CD14-positive monocyte (primary cell): ENCODE measurements at regions of chr12 and their contacts with region 1.

Region 1: DNA sequence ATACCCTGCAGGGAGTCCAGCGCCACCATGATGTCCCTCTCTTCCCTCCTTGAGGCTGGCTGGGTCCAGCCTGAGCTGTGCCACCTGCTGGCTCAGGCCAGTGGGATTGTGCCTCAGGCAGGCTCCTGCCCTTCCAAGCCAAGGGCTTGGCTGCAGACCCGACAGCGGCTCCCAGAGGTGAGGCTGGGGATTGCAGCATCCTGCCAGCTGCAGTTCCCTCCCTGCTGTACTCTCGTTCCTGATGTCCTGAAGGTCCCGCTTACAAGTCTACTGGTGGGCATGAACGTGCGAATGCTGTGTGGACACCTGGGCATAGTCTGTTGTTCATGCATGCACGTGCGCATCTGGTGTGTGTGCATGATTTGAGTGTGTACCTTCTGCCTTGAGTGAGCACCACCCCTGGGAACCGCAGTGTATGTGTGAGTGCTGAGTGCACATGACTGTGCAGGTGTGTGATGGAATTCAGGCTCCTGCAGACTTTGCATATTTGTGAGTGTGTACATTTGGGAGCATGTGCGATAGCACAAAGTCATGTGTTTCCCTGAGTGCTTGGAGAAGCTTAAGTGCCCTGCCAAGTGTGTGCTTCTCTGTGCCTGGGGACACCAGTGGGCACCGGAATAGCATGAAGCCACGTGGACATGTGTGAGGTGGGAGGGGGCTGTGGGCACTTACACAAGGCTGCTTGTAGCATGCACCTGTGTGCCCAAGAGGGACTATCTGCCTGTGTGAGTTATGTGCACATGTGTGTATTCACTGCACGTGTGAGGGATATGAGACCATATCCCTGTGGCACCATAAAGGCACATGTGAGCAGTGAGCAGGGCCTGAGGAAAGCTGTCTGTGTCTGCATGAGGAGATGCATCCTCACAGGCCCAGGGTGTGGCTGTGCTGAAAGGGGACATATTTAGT is 19.3 kb upstream of the KRT7 start:
- DNase-seq: peak; percentile 80 to 87 (median 82)
- H3K4me3 ChIP-seq: no peak overlapping the region
- H3K4me3 Mint-ChIP-seq: no peak overlapping the region
- H3K27ac ChIP-seq: no peak overlapping the region
- H3K27ac Mint-ChIP-seq: peak overlapping the region in 2 of 7 donors; percentile 50 to 77
- H3K4me1 ChIP-seq: peaks cover 22 to 41% of the 10 kb centered on the region in 2 donors
- H3K4me1 Mint-ChIP-seq: peaks cover 51% of the 10 kb centered on the region
- H3K27me3 ChIP-seq: no peaks in the 10 kb centered on the region
- H3K27me3 Mint-ChIP-seq: peaks cover under 1 to 2% (median 1%) of the 10 kb centered on the region in 3 donors
- CTCF ChIP-seq: peak; percentile 99

Region 2: DNA sequence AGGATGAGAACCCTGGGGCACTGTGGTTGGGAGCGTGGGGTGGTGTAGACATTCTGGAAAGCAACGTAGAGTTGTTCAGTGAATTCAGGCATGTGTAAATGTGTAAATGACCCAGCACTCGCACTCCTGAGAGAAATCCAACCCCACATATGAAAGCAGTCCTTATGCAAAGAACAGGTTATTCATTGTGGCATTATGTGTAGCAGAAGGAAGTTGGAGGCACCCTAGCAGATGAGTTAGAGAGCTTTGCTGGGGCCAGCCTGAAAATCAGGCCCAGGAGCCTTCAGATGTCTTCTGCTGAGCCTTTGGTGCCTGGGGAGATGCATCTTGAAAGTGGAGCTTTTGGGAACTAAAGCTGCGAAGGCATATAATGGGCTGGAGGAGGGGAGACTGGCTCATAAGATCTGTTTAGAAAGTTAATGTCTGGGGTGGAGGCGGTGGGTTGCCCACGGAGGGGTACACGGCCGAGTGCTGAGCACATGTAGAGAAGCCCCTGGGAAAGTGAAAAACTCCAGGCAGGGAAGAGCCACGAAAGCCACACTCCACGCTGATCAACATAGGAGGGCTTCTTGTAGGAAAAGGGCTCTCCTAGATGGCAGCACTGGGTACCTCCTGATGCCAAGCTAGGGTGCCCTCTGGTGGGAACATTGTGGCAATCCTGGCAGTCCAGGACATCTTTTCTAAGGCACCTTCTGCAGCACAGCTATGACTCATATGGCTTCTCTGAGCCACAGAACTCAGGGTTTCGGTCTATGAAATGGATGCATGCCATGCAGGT is 113.5 kb after region 1 on chr12:
- intact Hi-C with region 1: loop called in 1 of 2 experiments (anchors 5 kb)
- DNase-seq: peak; percentile 81 to 90 (median 87)
- H3K4me3 ChIP-seq: no peak overlapping the region
- H3K4me3 Mint-ChIP-seq: no peak overlapping the region
- H3K27ac ChIP-seq: no peak overlapping the region
- H3K27ac Mint-ChIP-seq: no peak overlapping the region
- H3K4me1 ChIP-seq: no peaks in the 10 kb centered on the region
- H3K4me1 Mint-ChIP-seq: peaks cover 4% of the 10 kb centered on the region
- H3K27me3 ChIP-seq: peaks cover 0 to 11% of the 10 kb centered on the region in 2 donors
- H3K27me3 Mint-ChIP-seq: peaks cover 16 to 36% (median 22%) of the 10 kb centered on the region in 3 donors
- CTCF ChIP-seq: peak; percentile 88